Psoas muscle (tissue), 8 donors: ENCODE measurements at regions of chr16 and their contacts with region 1.

Region 1: DNA sequence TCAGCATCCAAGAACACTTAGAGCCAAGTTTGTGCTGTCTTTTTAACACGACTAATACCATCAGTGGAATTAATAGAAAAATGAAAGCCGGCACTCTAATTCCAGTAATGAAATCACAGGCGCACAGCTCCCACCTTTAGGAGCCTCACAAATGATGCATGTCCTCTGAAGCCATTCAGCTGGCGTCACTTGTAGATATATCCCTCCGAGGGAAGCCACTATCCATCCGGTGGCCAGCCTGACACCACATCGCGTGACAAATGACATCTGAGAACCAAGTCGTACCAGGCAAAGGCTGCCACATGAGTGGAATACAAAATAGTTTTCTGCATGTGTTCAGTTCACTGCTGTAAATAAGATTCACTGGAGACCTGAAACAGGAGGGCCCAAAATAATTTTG is 205.6 kb downstream of the GRIN2A start:
- DNase-seq: no peak
- ATAC-seq: no peak
- H3K4me3 ChIP-seq: no peak overlapping the region
- H3K27ac ChIP-seq: no peak overlapping the region
- H3K4me1 ChIP-seq: no peaks in the 10 kb centered on the region
- H3K27me3 ChIP-seq: no peaks in the 10 kb centered on the region
- CTCF ChIP-seq: no peak

Region 2: GRCh38 chr16:10009684-10010083 is 33.1 kb after region 1 on chr16:
- intact Hi-C with region 1: no loop called
- DNase-seq: no peak
- ATAC-seq: no peak
- H3K4me3 ChIP-seq: no peak overlapping the region
- H3K27ac ChIP-seq: no peak overlapping the region
- H3K4me1 ChIP-seq: no peaks in the 10 kb centered on the region
- H3K27me3 ChIP-seq: peaks cover 0 to 5% (median 5%) of the 10 kb centered on the region in 3 donors
- CTCF ChIP-seq: no peak

Region 3: GRCh38 chr16:10039220-10040096 is 62.9 kb after region 1 on chr16:
- intact Hi-C with region 1: loop called in 1 of 2 experiments (anchors 10 kb)
- DNase-seq: no peak
- ATAC-seq: no peak
- H3K4me3 ChIP-seq: no peak overlapping the region
- H3K27ac ChIP-seq: no peak overlapping the region
- H3K4me1 ChIP-seq: no peaks in the 10 kb centered on the region
- H3K27me3 ChIP-seq: peaks cover 0 to 19% (median 4%) of the 10 kb centered on the region in 3 donors
- CTCF ChIP-seq: no peak